ENCODE measurements at regions of chr12 and their contacts with region 1.

Region 1: GRCh38 chr12:25725931-25726330 is 172.8 kb upstream of the LMNTD1 start:
- DNase-seq: no peak

Region 2: GRCh38 chr12:25352083-25352918 is 373.6 kb before region 1 on chr12:
- intact Hi-C with region 1: no loop called
- DNase-seq: no peak

Region 3: DNA sequence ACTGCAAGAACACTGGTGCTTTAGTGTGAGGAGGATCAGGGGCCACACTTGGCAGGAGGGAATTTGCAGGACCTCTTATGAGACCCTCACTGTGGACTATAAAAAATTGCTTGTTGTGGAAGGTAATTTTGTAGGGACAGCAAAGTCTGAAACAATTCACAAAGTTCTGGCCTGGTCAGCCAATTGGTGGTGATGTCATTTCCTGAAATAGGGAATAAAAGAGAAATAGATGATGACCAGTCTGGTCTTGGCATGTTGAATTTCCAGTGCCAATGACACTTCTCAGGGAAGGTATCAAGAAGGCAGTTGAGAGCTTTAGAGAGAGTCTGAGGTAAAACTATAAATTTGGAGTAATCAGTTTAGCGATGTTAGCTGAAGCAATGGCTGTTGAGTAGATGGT is 43.5 kb before region 1 on chr12:
- intact Hi-C with region 1: no loop called
- DNase-seq: no peak

Region 4: DNA sequence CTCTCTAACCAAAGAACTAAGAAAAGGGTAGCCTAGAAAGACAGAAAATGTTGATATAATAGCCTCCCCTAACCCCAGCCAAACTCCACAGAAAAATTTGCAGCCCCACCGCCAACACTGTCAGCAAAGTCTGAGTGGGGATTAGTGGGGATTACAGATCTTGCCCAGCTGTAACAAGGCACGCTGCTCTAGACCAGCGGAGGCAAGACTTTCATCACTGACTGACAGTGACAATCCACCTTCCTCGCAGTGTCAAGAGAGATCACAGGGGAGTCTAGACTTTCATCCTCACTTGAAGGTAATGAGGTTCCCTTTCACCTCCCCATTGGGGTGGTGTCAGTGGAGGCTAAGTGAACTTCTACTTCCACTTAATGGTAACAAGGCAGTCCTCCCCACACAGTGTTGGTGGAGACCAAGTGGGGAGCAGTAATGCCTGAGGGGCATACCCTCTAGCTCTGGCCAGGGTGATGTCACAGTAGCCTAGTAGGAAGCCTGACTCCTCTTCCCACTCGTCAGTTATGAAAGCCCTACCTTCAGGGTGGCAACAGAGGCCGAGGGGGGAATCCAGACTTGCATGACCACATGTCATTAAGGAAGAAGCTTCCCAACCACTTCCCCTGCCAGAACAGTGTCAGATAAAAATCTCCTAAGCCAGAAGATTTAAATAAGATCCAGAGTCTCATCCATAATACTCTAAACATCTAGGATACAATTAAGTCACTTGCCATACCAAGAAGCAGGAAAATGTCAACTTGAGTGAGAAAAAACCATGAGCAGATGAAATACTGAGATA is 140.9 kb after region 1 on chr12:
- intact Hi-C with region 1: loop called (anchors 10 kb)
- DNase-seq: no peak

Region 5: GRCh38 chr12:25977047-25977446 is 251.1 kb after region 1 on chr12:
- intact Hi-C with region 1: no loop called
- DNase-seq: no peak

Measured in cardiac septum (tissue), 1 donor.